ENCODE measurements at regions of chr2 and their contacts with region 1.

Region 1: GRCh38 chr2:228681426-228681825 is 499.9 kb upstream of the SPHKAP start:
- DNase-seq: no peak
- H3K4me3 ChIP-seq: no peak overlapping the region
- H3K27ac ChIP-seq: no peak overlapping the region
- H3K4me1 ChIP-seq: no peaks in the 10 kb centered on the region
- H3K27me3 ChIP-seq: no peaks in the 10 kb centered on the region
- CTCF ChIP-seq: peak; percentile 44 to 66 (median 49)
- EP300 ChIP-seq: no peak
- POLR2A ChIP-seq: no peak

Region 2: DNA sequence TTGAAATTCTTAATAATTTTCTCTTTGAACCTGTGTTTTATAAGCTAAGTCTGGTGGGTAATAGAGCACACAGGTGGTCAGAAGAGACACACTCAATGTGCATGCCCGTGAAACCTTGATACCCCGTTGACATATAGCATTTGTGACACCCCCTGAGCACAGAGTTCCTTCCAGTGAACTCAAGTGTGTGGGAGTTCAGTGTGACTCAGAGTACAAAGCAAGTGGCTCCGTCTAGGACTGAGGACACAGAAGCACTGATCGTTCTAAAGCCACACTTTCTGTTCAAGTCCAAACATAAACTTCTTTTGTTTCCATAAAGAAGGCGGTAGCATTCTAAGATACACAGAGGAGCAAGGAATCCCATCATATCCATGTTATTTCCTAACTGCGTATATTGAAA is 66.1 kb after region 1 on chr2:
- in situ Hi-C with region 1: no loop called
- intact Hi-C with region 1: no loop called
- DNase-seq: no peak
- H3K4me3 ChIP-seq: no peak overlapping the region
- H3K27ac ChIP-seq: no peak overlapping the region
- H3K4me1 ChIP-seq: no peaks in the 10 kb centered on the region
- H3K27me3 ChIP-seq: no peaks in the 10 kb centered on the region
- CTCF ChIP-seq: no peak
- EP300 ChIP-seq: no peak
- POLR2A ChIP-seq: no peak

Region 3: GRCh38 chr2:229133155-229133772 is 451.8 kb after region 1 on chr2:
- in situ Hi-C with region 1: loop called in 1 of 4 experiments (anchors 25 kb)
- intact Hi-C with region 1: no loop called
- DNase-seq: peak; percentile 26
- H3K4me3 ChIP-seq: no peak overlapping the region
- H3K27ac ChIP-seq: no peak overlapping the region
- H3K4me1 ChIP-seq: peaks cover 8 to 39% (median 19%) of the 10 kb centered on the region in 4 donors
- H3K27me3 ChIP-seq: no peaks in the 10 kb centered on the region
- CTCF ChIP-seq: peak; percentile 41 to 70 (median 52)
- EP300 ChIP-seq: no peak
- POLR2A ChIP-seq: no peak

Region 4: GRCh38 chr2:229273723-229274338 is 592.4 kb after region 1 on chr2:
- in situ Hi-C with region 1: loop called in 2 of 4 experiments (anchors 25 kb)
- intact Hi-C with region 1: no loop called
- DNase-seq: peak; percentile 86
- H3K4me3 ChIP-seq: peak overlapping the region in 2 of 4 donors; percentile 13 to 28
- H3K27ac ChIP-seq: peak overlapping the region; percentile 68 to 81 (median 74)
- H3K4me1 ChIP-seq: peaks cover 3 to 49% (median 13%) of the 10 kb centered on the region in 4 donors
- H3K27me3 ChIP-seq: no peaks in the 10 kb centered on the region
- CTCF ChIP-seq: peak; percentile 64 to 87 (median 78)
- EP300 ChIP-seq: no peak
- POLR2A ChIP-seq: no peak

Region 5: GRCh38 chr2:229282758-229283546 is 601.5 kb after region 1 on chr2:
- in situ Hi-C with region 1: loop called in 1 of 4 experiments (anchors 25 kb)
- intact Hi-C with region 1: no loop called
- DNase-seq: peak; percentile 23
- H3K4me3 ChIP-seq: no peak overlapping the region
- H3K27ac ChIP-seq: no peak overlapping the region
- H3K4me1 ChIP-seq: no peaks in the 10 kb centered on the region
- H3K27me3 ChIP-seq: no peaks in the 10 kb centered on the region
- CTCF ChIP-seq: no peak
- EP300 ChIP-seq: no peak
- POLR2A ChIP-seq: no peak

Region 6: GRCh38 chr2:229586746-229587705 is 905.6 kb after region 1 on chr2:
- in situ Hi-C with region 1: loop called in 3 of 4 experiments (anchors 25 kb)
- intact Hi-C with region 1: no loop called
- DNase-seq: peak; percentile 75
- H3K4me3 ChIP-seq: peak overlapping the region in 1 of 4 donors; percentile 27
- H3K27ac ChIP-seq: no peak overlapping the region
- H3K4me1 ChIP-seq: peaks cover 0 to 4% (median 2%) of the 10 kb centered on the region in 4 donors
- H3K27me3 ChIP-seq: no peaks in the 10 kb centered on the region
- CTCF ChIP-seq: peak; percentile 73 to 81 (median 79)
- EP300 ChIP-seq: no peak
- POLR2A ChIP-seq: no peak

Measured in transverse colon (tissue), 4 donors.